CD4-positive, alpha-beta T cell (primary cell): ENCODE measurements at regions of chr6 and their contacts with region 1.

Region 1: DNA sequence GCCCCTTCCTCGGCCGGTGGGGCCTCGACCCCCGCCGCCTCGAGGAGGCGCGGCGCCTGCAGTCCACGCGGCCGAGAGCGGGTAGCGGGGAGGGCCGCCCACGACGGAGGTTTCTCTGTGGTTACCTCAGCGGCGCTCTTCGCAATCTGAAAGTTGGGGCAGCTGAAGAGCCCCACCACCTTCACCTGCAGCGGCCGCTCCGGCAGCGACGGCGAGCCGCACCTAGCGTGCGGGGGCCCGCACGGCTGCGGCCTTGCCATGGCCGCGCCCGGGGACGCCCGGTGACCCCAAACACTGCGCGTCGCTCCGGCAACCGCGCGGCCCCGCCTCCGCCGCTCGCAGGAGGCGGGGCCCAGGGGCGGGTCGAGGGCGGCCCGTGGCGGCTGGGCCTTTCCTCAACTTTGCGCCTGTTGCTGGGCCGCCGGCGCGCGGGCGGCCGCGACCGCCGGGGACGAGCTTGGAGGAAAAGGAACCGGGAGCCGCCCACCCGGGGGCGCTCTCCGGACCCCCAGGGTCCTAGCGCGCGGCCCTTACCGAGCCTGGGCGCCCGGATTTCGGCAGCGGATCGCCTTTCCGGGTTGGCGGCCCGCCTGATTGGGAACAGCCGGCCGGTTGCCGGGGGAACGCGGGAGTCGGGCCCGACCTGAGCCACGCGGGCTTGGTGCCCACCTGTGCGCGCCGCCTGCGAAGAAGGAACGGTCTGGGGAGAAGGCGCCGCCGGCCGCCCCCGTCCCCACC is at the starts of genes PPIL6 and SMPD2:
- DNase-seq: peak; percentile 54 to 92 (median 73)
- ATAC-seq: peak; percentile 75
- H3K4me3 ChIP-seq: peak within 1 kb of the TSS; percentile 81
- H3K4me3 Mint-ChIP-seq: peak within 1 kb of the TSS; percentile 95
- H3K27ac ChIP-seq: peak within 1 kb of the TSS; percentile 74 to 82
- H3K27ac Mint-ChIP-seq: peak within 1 kb of the TSS; percentile 93
- H3K4me1 ChIP-seq: peaks cover 39% of the 10 kb centered on the region
- H3K4me1 Mint-ChIP-seq: peaks cover 27% of the 10 kb centered on the region
- H3K27me3 ChIP-seq: no peaks in the 10 kb centered on the region
- H3K27me3 Mint-ChIP-seq: no peaks in the 10 kb centered on the region
- CTCF ChIP-seq: peak; percentile 4
- total RNA-seq, gene PPIL6: 0.84 to 1.3 TPM
- total RNA-seq, gene SMPD2: 25.7 to 27.3 TPM

Region 2: GRCh38 chr6:109369724-109370123 is 70.8 kb before region 1 on chr6:
- CTCF ChIA-PET with region 1: no interaction called
- POLR2A ChIA-PET with region 1: no interaction called
- intact Hi-C with region 1: no loop called
- DNase-seq: no peak
- ATAC-seq: no peak
- H3K4me3 ChIP-seq: no peak overlapping the region
- H3K4me3 Mint-ChIP-seq: no peak overlapping the region
- H3K27ac ChIP-seq: no peak overlapping the region
- H3K27ac Mint-ChIP-seq: no peak overlapping the region
- H3K4me1 ChIP-seq: peaks cover 15% of the 10 kb centered on the region
- H3K4me1 Mint-ChIP-seq: peaks cover 62% of the 10 kb centered on the region
- H3K27me3 ChIP-seq: no peaks in the 10 kb centered on the region
- H3K27me3 Mint-ChIP-seq: no peaks in the 10 kb centered on the region
- CTCF ChIP-seq: no peak

Region 3: GRCh38 chr6:109389650-109390274 is 50.7 kb before region 1 on chr6:
- CTCF ChIA-PET with region 1: interaction called, 3 read pairs
- POLR2A ChIA-PET with region 1: interaction called, 102 read pairs
- intact Hi-C with region 1: loop called in 1 of 2 experiments (anchors 2 kb)
- DNase-seq: no peak
- ATAC-seq: no peak
- H3K4me3 ChIP-seq: no peak overlapping the region
- H3K4me3 Mint-ChIP-seq: no peak overlapping the region
- H3K27ac ChIP-seq: no peak overlapping the region
- H3K27ac Mint-ChIP-seq: no peak overlapping the region
- H3K4me1 ChIP-seq: no peaks in the 10 kb centered on the region
- H3K4me1 Mint-ChIP-seq: peaks cover 9% of the 10 kb centered on the region
- H3K27me3 ChIP-seq: no peaks in the 10 kb centered on the region
- H3K27me3 Mint-ChIP-seq: no peaks in the 10 kb centered on the region
- CTCF ChIP-seq: no peak

Region 4: DNA sequence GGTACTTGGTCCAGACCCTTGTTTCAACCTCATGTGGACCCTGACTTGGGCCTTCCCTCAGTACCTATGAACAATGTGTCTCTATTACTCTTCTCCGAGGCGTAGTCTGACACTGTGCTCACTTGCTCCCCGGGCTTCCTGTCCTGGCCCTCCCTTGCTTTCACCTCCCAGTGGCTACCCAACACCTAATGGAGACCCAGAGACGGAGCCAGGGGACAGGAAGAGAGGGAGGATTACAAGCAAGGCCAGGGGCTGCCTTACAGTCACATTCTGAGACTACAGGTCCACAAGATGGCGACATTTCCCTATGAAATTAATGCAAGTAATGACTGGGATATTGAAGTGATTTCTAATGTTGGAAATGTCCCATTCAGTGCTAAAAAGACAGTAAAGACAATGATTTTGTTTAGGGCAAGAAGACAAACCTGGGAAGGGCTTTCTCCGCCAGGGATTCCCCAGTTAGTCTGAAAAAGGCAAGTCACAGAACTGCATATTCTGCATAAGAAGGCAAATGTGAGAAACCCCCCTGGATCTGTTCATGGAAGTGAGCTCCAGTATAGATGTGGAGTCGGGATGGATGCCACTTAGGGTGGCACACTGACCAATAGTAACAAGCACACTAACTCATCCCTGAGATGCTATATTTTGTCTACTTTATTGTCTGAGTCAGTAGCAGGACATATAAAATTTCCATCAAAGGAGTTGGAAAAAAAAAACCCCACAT is 86.6 kb after region 1 on chr6:
- CTCF ChIA-PET with region 1: no interaction called
- POLR2A ChIA-PET with region 1: no interaction called
- intact Hi-C with region 1: no loop called
- DNase-seq: peak in 13 of 14 experiments; percentile 9 to 78 (median 32)
- ATAC-seq: peak; percentile 61
- H3K4me3 ChIP-seq: no peak overlapping the region
- H3K4me3 Mint-ChIP-seq: no peak overlapping the region
- H3K27ac ChIP-seq: no peak overlapping the region
- H3K27ac Mint-ChIP-seq: no peak overlapping the region
- H3K4me1 ChIP-seq: peaks cover 4% of the 10 kb centered on the region
- H3K4me1 Mint-ChIP-seq: no peaks in the 10 kb centered on the region
- H3K27me3 ChIP-seq: no peaks in the 10 kb centered on the region
- H3K27me3 Mint-ChIP-seq: no peaks in the 10 kb centered on the region
- CTCF ChIP-seq: peak; percentile 75

Region 5: GRCh38 chr6:110981202-110981600 is 1540.7 kb after region 1 on chr6:
- CTCF ChIA-PET with region 1: no interaction called
- POLR2A ChIA-PET with region 1: no interaction called
- intact Hi-C with region 1: loop called in 1 of 2 experiments (anchors 5 kb)
- DNase-seq: peak in 1 of 14 experiments; percentile 43
- ATAC-seq: peak; percentile 1
- H3K4me3 ChIP-seq: peak overlapping the region; percentile 99
- H3K4me3 Mint-ChIP-seq: peak overlapping the region; percentile 99
- H3K27ac ChIP-seq: peak overlapping the region; percentile 77 to 97
- H3K27ac Mint-ChIP-seq: peak overlapping the region; percentile 99
- H3K4me1 ChIP-seq: peaks cover 14% of the 10 kb centered on the region
- H3K4me1 Mint-ChIP-seq: peaks cover 49% of the 10 kb centered on the region
- H3K27me3 ChIP-seq: no peaks in the 10 kb centered on the region
- H3K27me3 Mint-ChIP-seq: no peaks in the 10 kb centered on the region
- CTCF ChIP-seq: no peak